GM12878 (cell line): ENCODE measurements at regions of chr2 and their contacts with region 1.

Region 1: DNA sequence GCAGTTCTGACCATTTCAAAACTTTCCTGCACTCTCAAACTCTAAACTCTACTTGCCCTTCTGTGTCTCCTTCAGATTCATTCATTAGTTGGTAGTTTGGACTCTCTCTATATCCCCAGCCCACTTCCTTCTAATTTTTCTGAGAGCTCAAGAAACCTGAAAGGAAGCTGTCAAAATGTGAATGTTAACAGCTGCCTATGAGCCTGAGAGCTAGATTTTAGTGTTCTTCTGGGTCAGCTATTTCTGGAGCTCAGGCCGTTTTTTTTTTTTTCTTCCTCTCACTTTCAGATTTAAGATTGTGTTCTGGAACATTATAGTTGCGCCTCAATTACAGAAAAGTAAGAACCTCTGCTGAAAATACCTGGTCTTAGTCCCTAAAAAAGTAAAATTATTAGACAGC is 73.1 kb downstream of the RTN4 start:
- DNase-seq: peak; percentile 77
- ATAC-seq: peak; percentile 93
- H3K4me3 ChIP-seq: peak overlapping the region; percentile 53; the same call in 1 of the 2 replicates
- H3K27ac ChIP-seq: peak overlapping the region; percentile 74
- H3K4me1 ChIP-seq: peaks cover 26% of the 10 kb centered on the region
- H3K27me3 ChIP-seq: no peaks in the 10 kb centered on the region
- CTCF ChIP-seq: no peak
- EP300 ChIP-seq: peak in 1 of 2 experiments; percentile 23; a peak in 1 of 4 replicates
- POLR2A ChIP-seq: no peak
- RAD21 ChIP-seq: no peak; the same call in 1 of the 2 replicates

Region 2: DNA sequence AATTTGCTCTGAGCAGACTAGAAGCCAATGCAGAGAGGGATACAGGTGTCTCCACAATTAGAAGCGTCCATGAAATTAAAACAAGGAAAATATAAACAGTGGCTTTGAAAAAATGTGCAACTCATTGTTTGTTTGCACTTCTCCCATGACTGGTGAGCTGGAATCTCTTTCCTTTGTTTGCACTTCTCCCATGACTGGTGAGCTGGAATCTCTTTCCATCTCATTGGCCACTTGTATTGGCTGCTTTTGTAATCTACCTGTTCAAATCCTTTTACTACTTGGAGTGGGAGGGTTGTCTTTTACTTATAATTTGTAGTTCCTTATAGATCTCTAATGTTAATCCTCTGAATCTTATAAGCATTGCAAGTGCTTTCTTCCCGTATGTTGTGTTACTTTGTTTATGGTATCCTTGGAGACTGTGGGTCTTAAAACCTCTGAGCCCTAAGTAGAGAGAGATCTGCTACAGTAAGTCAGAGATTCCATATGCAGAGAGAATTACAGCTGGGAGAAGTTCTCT is 21.0 kb before region 1 on chr2:
- CTCF ChIA-PET with region 1: interaction called, 4 read pairs
- POLR2A ChIA-PET with region 1: no interaction called
- RAD21 ChIA-PET with region 1: interaction called, 13 read pairs
- SMC1A ChIA-PET with region 1: interaction called, 15 read pairs
- in situ Hi-C with region 1: no loop called
- intact Hi-C with region 1: no loop called
- DNase-seq: no peak
- ATAC-seq: no peak
- H3K4me3 ChIP-seq: no peak overlapping the region
- H3K27ac ChIP-seq: no peak overlapping the region
- H3K4me1 ChIP-seq: no peaks in the 10 kb centered on the region; the same call in 1 of the 2 replicates
- H3K27me3 ChIP-seq: no peaks in the 10 kb centered on the region
- CTCF ChIP-seq: no peak
- EP300 ChIP-seq: no peak
- POLR2A ChIP-seq: no peak
- RAD21 ChIP-seq: no peak

Region 3: GRCh38 chr2:54999182-54999581 is 22.0 kb after region 1 on chr2:
- CTCF ChIA-PET with region 1: interaction called, 4 read pairs
- POLR2A ChIA-PET with region 1: interaction called, 5 read pairs
- RAD21 ChIA-PET with region 1: interaction called, 5 read pairs
- SMC1A ChIA-PET with region 1: interaction called, 28 read pairs
- in situ Hi-C with region 1: no loop called
- intact Hi-C with region 1: no loop called
- DNase-seq: no peak
- ATAC-seq: peak; percentile 61
- H3K4me3 ChIP-seq: peak overlapping the region; percentile 45; the same call in 1 of the 2 replicates
- H3K27ac ChIP-seq: peak overlapping the region; percentile 1; the same call in 1 of the 2 replicates
- H3K4me1 ChIP-seq: peaks cover 18% of the 10 kb centered on the region; the same call in 1 of the 2 replicates
- H3K27me3 ChIP-seq: no peaks in the 10 kb centered on the region
- CTCF ChIP-seq: no peak
- EP300 ChIP-seq: 0 out of 4 replicates have a peak, but pooled peaks of 1 of the 2 experiments have one; percentile 10
- POLR2A ChIP-seq: no peak
- RAD21 ChIP-seq: no peak

Region 4: GRCh38 chr2:55223958-55224760 is 247.0 kb after region 1 on chr2:
- CTCF ChIA-PET with region 1: no interaction called
- POLR2A ChIA-PET with region 1: no interaction called
- RAD21 ChIA-PET with region 1: no interaction called
- SMC1A ChIA-PET with region 1: no interaction called
- in situ Hi-C with region 1: no loop called
- intact Hi-C with region 1: no loop called
- DNase-seq: no peak
- ATAC-seq: no peak
- H3K4me3 ChIP-seq: no peak overlapping the region
- H3K27ac ChIP-seq: no peak overlapping the region
- H3K4me1 ChIP-seq: no peaks in the 10 kb centered on the region; the same call in 1 of the 2 replicates
- H3K27me3 ChIP-seq: no peaks in the 10 kb centered on the region
- CTCF ChIP-seq: no peak
- EP300 ChIP-seq: no peak
- POLR2A ChIP-seq: no peak
- RAD21 ChIP-seq: no peak

Region 5: GRCh38 chr2:55929476-55929875 is 952.3 kb after region 1 on chr2:
- CTCF ChIA-PET with region 1: no interaction called
- POLR2A ChIA-PET with region 1: no interaction called
- RAD21 ChIA-PET with region 1: no interaction called
- SMC1A ChIA-PET with region 1: no interaction called
- in situ Hi-C with region 1: no loop called
- intact Hi-C with region 1: no loop called
- DNase-seq: no peak
- ATAC-seq: no peak
- H3K4me3 ChIP-seq: no peak overlapping the region
- H3K27ac ChIP-seq: no peak overlapping the region
- H3K4me1 ChIP-seq: no peaks in the 10 kb centered on the region
- H3K27me3 ChIP-seq: no peaks in the 10 kb centered on the region; a peak in 1 of 4 replicates
- CTCF ChIP-seq: no peak
- EP300 ChIP-seq: no peak
- POLR2A ChIP-seq: no peak
- RAD21 ChIP-seq: no peak